Naive thymus-derived CD4-positive, alpha-beta T cell (primary cell): ENCODE measurements at regions of chr6 and their contacts with region 1.

Region 1: GRCh38 chr6:26196846-26197648 is 109.8 kb downstream of the HFE start:
- DNase-seq: peak; percentile 55 to 95 (median 93)
- ATAC-seq: peak; percentile 73
- H3K4me3 ChIP-seq: peak overlapping the region; percentile 92
- H3K4me3 Mint-ChIP-seq: peak overlapping the region; percentile 85 to 99 (median 96)
- H3K27ac ChIP-seq: peak overlapping the region; percentile 91
- H3K27ac Mint-ChIP-seq: peak overlapping the region; percentile 96 to 100 (median 98)
- H3K4me1 ChIP-seq: peaks cover 10 to 12% of the 10 kb centered on the region in 2 donors
- H3K4me1 Mint-ChIP-seq: peaks cover 23 to 65% (median 42%) of the 10 kb centered on the region in 7 donors
- H3K27me3 ChIP-seq: no peaks in the 10 kb centered on the region
- H3K27me3 Mint-ChIP-seq: peaks cover 0 to 12% (median 0%) of the 10 kb centered on the region in 5 donors

Region 2: DNA sequence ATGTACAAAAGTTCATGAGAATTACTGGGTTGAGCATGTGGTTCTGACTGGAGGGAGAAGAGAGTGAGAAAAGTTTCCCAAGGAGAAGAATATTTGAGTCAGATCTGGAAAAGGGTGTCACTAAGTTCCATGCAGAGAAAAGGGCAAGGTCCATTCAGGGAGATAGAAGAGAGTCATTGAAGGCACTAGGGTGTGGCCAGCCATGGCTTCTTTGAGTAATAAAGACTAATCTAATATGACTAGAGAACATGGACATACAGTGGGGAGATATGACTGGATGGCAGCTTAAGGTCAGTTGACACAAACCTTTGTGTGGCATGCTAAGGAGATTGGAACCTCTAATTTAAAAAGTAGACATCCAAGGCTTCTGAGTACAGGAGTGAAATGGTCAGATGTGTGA is 453.2 kb before region 1 on chr6:
- CTCF ChIA-PET with region 1: no interaction called
- POLR2A ChIA-PET with region 1: no interaction called
- intact Hi-C with region 1: no loop called
- DNase-seq: no peak
- ATAC-seq: no peak
- H3K4me3 ChIP-seq: no peak overlapping the region
- H3K4me3 Mint-ChIP-seq: no peak overlapping the region
- H3K27ac ChIP-seq: no peak overlapping the region
- H3K27ac Mint-ChIP-seq: no peak overlapping the region
- H3K4me1 ChIP-seq: no peaks in the 10 kb centered on the region
- H3K4me1 Mint-ChIP-seq: no peaks in the 10 kb centered on the region
- H3K27me3 ChIP-seq: no peaks in the 10 kb centered on the region
- H3K27me3 Mint-ChIP-seq: peaks cover 2 to 20% (median 4%) of the 10 kb centered on the region in 5 donors

Region 3: DNA sequence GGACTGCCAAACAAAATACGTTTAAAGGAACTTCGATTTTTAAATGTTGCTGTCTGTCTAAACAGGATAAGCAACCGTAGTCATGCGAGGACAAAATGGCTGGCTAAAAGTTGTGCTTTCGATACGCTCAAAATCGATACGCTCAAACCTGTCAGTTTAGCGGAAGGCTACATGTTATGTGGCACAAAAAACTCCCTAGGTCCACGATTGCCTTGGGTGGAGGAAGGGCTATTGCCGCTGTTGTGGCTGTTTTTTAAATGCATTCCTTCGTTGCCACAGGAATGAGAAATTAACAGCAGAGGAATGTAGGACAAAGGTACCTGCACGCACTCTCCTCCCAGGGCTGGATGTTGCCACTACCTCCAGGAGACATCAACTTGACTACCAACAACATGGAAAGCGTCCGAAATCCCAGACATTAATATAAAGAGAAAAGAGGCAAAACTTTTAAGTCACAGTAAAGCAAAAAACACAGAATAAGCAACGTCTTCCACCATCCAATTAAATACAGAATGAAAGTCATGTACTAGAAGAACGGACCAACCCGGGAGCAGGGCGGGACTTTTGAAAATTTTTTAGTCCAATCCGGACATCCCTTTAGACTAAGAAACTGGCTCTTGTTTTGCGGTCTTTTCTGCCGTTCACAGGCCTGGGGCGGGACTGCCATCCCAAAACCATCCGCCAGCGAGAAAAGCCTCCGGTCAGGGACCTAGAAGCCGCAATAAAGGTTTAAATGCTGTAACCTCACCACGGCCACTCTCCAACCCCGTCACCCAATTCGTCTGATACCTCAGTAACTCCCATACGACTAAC is 142.0 kb before region 1 on chr6:
- CTCF ChIA-PET with region 1: no interaction called
- POLR2A ChIA-PET with region 1: interaction called, 257 read pairs
- intact Hi-C with region 1: loop called (anchors 1 to 5 kb)
- DNase-seq: peak; percentile 54 to 94 (median 90)
- ATAC-seq: peak; percentile 81
- H3K4me3 ChIP-seq: peak overlapping the region; percentile 93
- H3K4me3 Mint-ChIP-seq: peak overlapping the region; percentile 88 to 99 (median 95)
- H3K27ac ChIP-seq: peak overlapping the region; percentile 83
- H3K27ac Mint-ChIP-seq: peak overlapping the region; percentile 95 to 99 (median 98)
- H3K4me1 ChIP-seq: peaks cover 0 to 14% of the 10 kb centered on the region in 2 donors
- H3K4me1 Mint-ChIP-seq: peaks cover 9 to 52% (median 10%) of the 10 kb centered on the region in 7 donors
- H3K27me3 ChIP-seq: no peaks in the 10 kb centered on the region
- H3K27me3 Mint-ChIP-seq: peaks cover 0 to 10% (median 0%) of the 10 kb centered on the region in 5 donors

Region 4: GRCh38 chr6:26183581-26184366 is 13.3 kb before region 1 on chr6:
- CTCF ChIA-PET with region 1: interaction called, 23 read pairs
- POLR2A ChIA-PET with region 1: interaction called, 3,606 read pairs
- intact Hi-C with region 1: loop called in 1 of 2 experiments (anchors 1 kb)
- DNase-seq: peak; percentile 43 to 83 (median 77)
- ATAC-seq: peak; percentile 91
- H3K4me3 ChIP-seq: peak overlapping the region; percentile 82
- H3K4me3 Mint-ChIP-seq: peak overlapping the region; percentile 84 to 99 (median 98)
- H3K27ac ChIP-seq: peak overlapping the region; percentile 76
- H3K27ac Mint-ChIP-seq: peak overlapping the region; percentile 83 to 99 (median 90)
- H3K4me1 ChIP-seq: peaks cover 13 to 30% of the 10 kb centered on the region in 2 donors
- H3K4me1 Mint-ChIP-seq: peaks cover 19 to 59% (median 49%) of the 10 kb centered on the region in 7 donors
- H3K27me3 ChIP-seq: no peaks in the 10 kb centered on the region
- H3K27me3 Mint-ChIP-seq: no peaks in the 10 kb centered on the region

Region 5: DNA sequence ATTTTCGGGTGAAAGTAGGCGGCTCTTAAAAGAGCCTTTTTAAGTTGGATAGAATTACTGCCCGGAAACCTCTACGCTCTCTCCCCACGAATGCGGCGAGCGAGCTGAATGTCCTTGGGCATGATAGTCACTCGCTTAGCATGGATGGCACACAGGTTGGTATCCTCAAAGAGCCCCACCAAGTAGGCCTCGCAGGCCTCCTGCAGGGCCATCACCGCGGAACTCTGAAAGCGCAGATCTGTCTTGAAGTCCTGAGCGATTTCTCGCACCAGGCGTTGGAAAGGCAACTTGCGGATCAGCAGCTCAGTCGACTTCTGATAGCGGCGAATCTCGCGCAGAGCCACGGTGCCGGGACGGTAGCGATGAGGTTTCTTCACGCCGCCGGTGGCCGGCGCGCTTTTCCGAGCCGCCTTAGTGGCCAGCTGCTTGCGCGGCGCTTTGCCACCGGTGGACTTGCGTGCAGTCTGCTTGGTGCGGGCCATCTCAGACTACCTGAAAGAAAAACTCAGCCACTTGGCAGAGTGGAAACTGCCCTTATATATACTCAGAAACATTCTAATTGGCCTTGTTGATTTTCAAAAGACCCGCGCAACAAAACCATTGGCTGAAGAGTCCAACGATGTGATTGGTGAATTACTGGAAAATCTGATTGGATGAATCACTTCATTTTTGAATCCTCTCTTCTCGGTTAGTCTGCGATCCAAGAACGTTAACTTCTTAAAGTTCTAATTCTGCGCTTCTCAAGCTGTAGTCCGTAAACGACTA is 74.0 kb after region 1 on chr6:
- CTCF ChIA-PET with region 1: interaction called, 10 read pairs
- POLR2A ChIA-PET with region 1: interaction called, 370 read pairs
- intact Hi-C with region 1: loop called (anchors 1 kb)
- DNase-seq: peak; percentile 50 to 89 (median 85)
- ATAC-seq: peak; percentile 24
- H3K4me3 ChIP-seq: peak overlapping the region; percentile 83
- H3K4me3 Mint-ChIP-seq: no peak overlapping the region
- H3K27ac ChIP-seq: peak overlapping the region; percentile 82
- H3K27ac Mint-ChIP-seq: peak overlapping the region in 2 of 9 donors; percentile 10 to 91
- H3K4me1 ChIP-seq: peaks cover 6 to 27% of the 10 kb centered on the region in 2 donors
- H3K4me1 Mint-ChIP-seq: peaks cover 0 to 34% (median 15%) of the 10 kb centered on the region in 7 donors
- H3K27me3 ChIP-seq: no peaks in the 10 kb centered on the region
- H3K27me3 Mint-ChIP-seq: no peaks in the 10 kb centered on the region

Region 6: DNA sequence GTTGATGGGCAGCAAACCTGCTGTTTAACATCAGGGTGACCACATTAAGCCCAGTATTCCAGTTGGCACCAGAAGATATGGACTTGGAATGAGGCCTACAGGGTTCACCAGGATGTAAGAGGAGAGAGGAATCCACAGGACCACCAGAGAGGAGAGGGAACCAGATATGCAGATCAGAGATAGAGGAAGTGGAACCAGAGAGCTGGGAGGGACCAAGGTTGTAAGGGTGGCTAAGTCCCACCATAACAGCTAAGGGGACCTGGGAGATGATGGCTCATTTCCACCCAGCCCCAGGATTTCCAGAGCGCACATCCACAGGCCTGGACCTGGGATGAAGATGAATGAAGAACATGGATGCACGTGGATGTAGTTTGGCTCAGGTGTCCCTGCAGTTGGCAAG is 271.8 kb after region 1 on chr6:
- CTCF ChIA-PET with region 1: no interaction called
- POLR2A ChIA-PET with region 1: no interaction called
- intact Hi-C with region 1: no loop called
- DNase-seq: no peak
- ATAC-seq: no peak
- H3K4me3 ChIP-seq: no peak overlapping the region
- H3K4me3 Mint-ChIP-seq: no peak overlapping the region
- H3K27ac ChIP-seq: no peak overlapping the region
- H3K27ac Mint-ChIP-seq: peak overlapping the region in 5 of 9 donors; percentile 18 to 74 (median 56)
- H3K4me1 ChIP-seq: peaks cover 12 to 16% of the 10 kb centered on the region in 2 donors
- H3K4me1 Mint-ChIP-seq: peaks cover 26 to 45% (median 36%) of the 10 kb centered on the region in 7 donors
- H3K27me3 ChIP-seq: no peaks in the 10 kb centered on the region
- H3K27me3 Mint-ChIP-seq: no peaks in the 10 kb centered on the region

Region 7: GRCh38 chr6:26537846-26538571 is 341.0 kb after region 1 on chr6 and contains the start of gene HMGN4:
- CTCF ChIA-PET with region 1: no interaction called
- POLR2A ChIA-PET with region 1: interaction called, 11 read pairs
- intact Hi-C with region 1: no loop called
- DNase-seq: peak; percentile 64 to 97 (median 95)
- ATAC-seq: peak; percentile 79
- H3K4me3 ChIP-seq: peak within 1 kb of the TSS; percentile 76
- H3K4me3 Mint-ChIP-seq: peak within 1 kb of the TSS; percentile 88 to 99 (median 94)
- H3K27ac ChIP-seq: peak within 1 kb of the TSS; percentile 88
- H3K27ac Mint-ChIP-seq: peak within 1 kb of the TSS; percentile 91 to 99 (median 98)
- H3K4me1 ChIP-seq: peaks cover 20 to 23% of the 10 kb centered on the region in 2 donors
- H3K4me1 Mint-ChIP-seq: peaks cover 46 to 72% (median 60%) of the 10 kb centered on the region in 7 donors
- H3K27me3 ChIP-seq: no peaks in the 10 kb centered on the region
- H3K27me3 Mint-ChIP-seq: peaks cover 0 to 5% (median 0%) of the 10 kb centered on the region in 5 donors
- total RNA-seq, gene HMGN4: 37.6 to 96.0 (median 81.7) TPM

Region 8: GRCh38 chr6:27825025-27825793 is 1628.2 kb after region 1 on chr6:
- CTCF ChIA-PET with region 1: no interaction called
- POLR2A ChIA-PET with region 1: interaction called, 16 read pairs
- intact Hi-C with region 1: loop called in 1 of 2 experiments (anchors 10 kb)
- DNase-seq: no peak
- ATAC-seq: no peak
- H3K4me3 ChIP-seq: peak overlapping the region; percentile 87
- H3K4me3 Mint-ChIP-seq: peak overlapping the region; percentile 82 to 99 (median 94)
- H3K27ac ChIP-seq: peak overlapping the region; percentile 89
- H3K27ac Mint-ChIP-seq: peak overlapping the region; percentile 90 to 100 (median 98)
- H3K4me1 ChIP-seq: peaks cover 6% of the 10 kb centered on the region in 2 donors
- H3K4me1 Mint-ChIP-seq: peaks cover 11 to 50% (median 33%) of the 10 kb centered on the region in 7 donors
- H3K27me3 ChIP-seq: no peaks in the 10 kb centered on the region
- H3K27me3 Mint-ChIP-seq: peaks cover 0 to 4% (median 0%) of the 10 kb centered on the region in 5 donors